ENCODE measurements at regions of chr13 and their contacts with region 1.

Region 1: DNA sequence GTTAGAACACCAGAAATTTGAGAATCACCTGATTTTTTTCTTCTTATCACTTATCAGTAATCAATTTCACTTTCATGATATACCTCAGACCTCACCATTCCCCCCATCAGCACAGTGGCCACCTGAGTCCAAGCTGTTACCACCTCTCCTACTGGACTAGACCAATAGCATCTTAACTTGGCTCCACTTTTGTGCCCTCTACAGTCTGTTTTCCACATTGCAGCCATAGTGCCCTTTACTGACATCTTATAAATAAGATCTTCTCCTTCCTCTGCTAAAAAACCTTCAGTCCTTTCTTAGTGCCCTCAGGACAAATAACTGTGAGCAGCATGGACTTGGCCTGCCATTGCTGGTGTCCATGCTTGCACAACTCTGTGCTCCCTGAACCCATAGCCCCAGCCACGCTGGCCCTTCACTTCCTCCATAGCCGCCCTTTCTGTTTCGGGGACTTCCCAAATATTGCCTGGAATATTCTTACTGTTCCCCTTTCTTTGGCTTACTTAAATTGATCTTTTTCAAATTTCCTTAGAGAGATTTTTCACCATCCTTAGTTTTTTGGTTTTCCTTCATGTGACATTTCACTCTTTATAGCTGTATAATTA is 380.8 kb downstream of the LMO7 start:
- DNase-seq: peak in 5 of 9 donors; percentile 2 to 21 (median 4)
- ATAC-seq: no peak
- H3K4me3 ChIP-seq: no peak overlapping the region
- H3K4me3 Mint-ChIP-seq: no peak overlapping the region
- H3K27ac ChIP-seq: no peak overlapping the region
- H3K27ac Mint-ChIP-seq: no peak overlapping the region
- H3K4me1 ChIP-seq: no peaks in the 10 kb centered on the region
- H3K4me1 Mint-ChIP-seq: peaks cover 0 to 11% (median 0%) of the 10 kb centered on the region in 7 donors
- H3K27me3 ChIP-seq: no peaks in the 10 kb centered on the region
- H3K27me3 Mint-ChIP-seq: peaks cover 0 to 5% (median 0%) of the 10 kb centered on the region in 5 donors

Region 2: GRCh38 chr13:75621147-75621546 is 395.8 kb before region 1 on chr13:
- CTCF ChIA-PET with region 1: no interaction called
- POLR2A ChIA-PET with region 1: no interaction called
- intact Hi-C with region 1: no loop called
- DNase-seq: no peak
- ATAC-seq: no peak
- H3K4me3 ChIP-seq: no peak overlapping the region
- H3K4me3 Mint-ChIP-seq: no peak overlapping the region
- H3K27ac ChIP-seq: no peak overlapping the region
- H3K27ac Mint-ChIP-seq: no peak overlapping the region
- H3K4me1 ChIP-seq: no peaks in the 10 kb centered on the region
- H3K4me1 Mint-ChIP-seq: no peaks in the 10 kb centered on the region
- H3K27me3 ChIP-seq: no peaks in the 10 kb centered on the region
- H3K27me3 Mint-ChIP-seq: no peaks in the 10 kb centered on the region

Region 3: DNA sequence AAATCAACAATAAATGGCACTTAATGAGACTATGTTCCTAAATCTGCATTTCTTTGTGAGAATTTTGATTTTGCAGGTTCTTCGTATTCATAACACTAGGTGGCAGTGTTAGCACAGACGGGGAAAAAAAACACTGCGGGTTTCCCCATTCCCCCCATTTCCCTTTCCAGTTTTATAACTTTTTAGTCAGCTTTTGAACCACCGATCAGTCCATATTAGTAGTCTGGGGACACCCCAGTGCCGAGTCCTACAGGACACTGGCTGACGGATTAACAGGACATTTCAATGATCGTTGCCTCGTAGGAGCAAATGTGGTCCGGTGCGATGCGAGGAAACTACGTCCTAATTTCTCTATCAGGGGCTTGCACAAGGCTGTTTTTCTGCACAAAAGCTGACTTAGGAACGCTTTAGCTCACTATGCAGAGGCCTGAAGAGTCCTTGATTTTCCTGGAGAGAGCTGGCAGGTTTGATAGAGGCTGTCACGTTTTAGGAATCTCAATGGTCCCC is 146.4 kb before region 1 on chr13:
- CTCF ChIA-PET with region 1: no interaction called
- POLR2A ChIA-PET with region 1: no interaction called
- intact Hi-C with region 1: loop called (anchors 1 to 2 kb)
- DNase-seq: peak in 6 of 9 donors; percentile 12 to 61 (median 38)
- ATAC-seq: peak; percentile 75
- H3K4me3 ChIP-seq: peak overlapping the region; percentile 50
- H3K4me3 Mint-ChIP-seq: peak overlapping the region; percentile 60 to 85 (median 80)
- H3K27ac ChIP-seq: peak overlapping the region; percentile 52
- H3K27ac Mint-ChIP-seq: peak overlapping the region; percentile 72 to 92 (median 86)
- H3K4me1 ChIP-seq: peaks cover 0 to 13% of the 10 kb centered on the region in 2 donors
- H3K4me1 Mint-ChIP-seq: peaks cover 4 to 29% (median 19%) of the 10 kb centered on the region in 7 donors
- H3K27me3 ChIP-seq: no peaks in the 10 kb centered on the region
- H3K27me3 Mint-ChIP-seq: peaks cover 0 to 13% (median 3%) of the 10 kb centered on the region in 5 donors